PC-3 (cell line): ENCODE measurements at regions of chr7 and their contacts with region 1.

Region 1: GRCh38 chr7:16447876-16448275 is 17.7 kb downstream of the SOSTDC1 start:
- DNase-seq: no peak
- ATAC-seq: no peak
- H3K4me3 ChIP-seq: no peak overlapping the region
- H3K27ac ChIP-seq: no peak overlapping the region
- H3K4me1 ChIP-seq: no peaks in the 10 kb centered on the region; the same call in 1 of the 2 replicates
- H3K27me3 ChIP-seq: no peaks in the 10 kb centered on the region
- CTCF ChIP-seq: no peak

Region 2: GRCh38 chr7:16484453-16485158 is 36.7 kb after region 1 on chr7:
- CTCF ChIA-PET with region 1: no interaction called
- POLR2A ChIA-PET with region 1: no interaction called
- intact Hi-C with region 1: loop called (anchors 5 kb)
- DNase-seq: peak; percentile 94
- ATAC-seq: peak; percentile 99
- H3K4me3 ChIP-seq: no peak overlapping the region
- H3K27ac ChIP-seq: peak overlapping the region; percentile 92
- H3K4me1 ChIP-seq: peaks cover 19% of the 10 kb centered on the region
- H3K27me3 ChIP-seq: no peaks in the 10 kb centered on the region
- CTCF ChIP-seq: no peak